A549 (cell line): ENCODE measurements at regions of chr16 and their contacts with region 1.

Region 1: GRCh38 chr16:9033125-9033830 is 58.2 kb upstream of the HAPSTR1 start:
- DNase-seq: peak; percentile 81 to 83
- ATAC-seq: peak; percentile 83 to 95; a peak in 5 of 6 replicates
- H3K4me3 ChIP-seq: no peak overlapping the region
- H3K27ac ChIP-seq: peak overlapping the region in 1 of 2 experiments; percentile 14; a peak in 1 of 6 replicates
- H3K4me1 ChIP-seq: no peaks in the 10 kb centered on the region
- CTCF ChIP-seq: peak; percentile 61
- EP300 ChIP-seq: no peak
- POLR2A ChIP-seq: no peak
- RAD21 ChIP-seq: peak; percentile 38 to 57; a peak in 2 of 5 replicates

Region 2: DNA sequence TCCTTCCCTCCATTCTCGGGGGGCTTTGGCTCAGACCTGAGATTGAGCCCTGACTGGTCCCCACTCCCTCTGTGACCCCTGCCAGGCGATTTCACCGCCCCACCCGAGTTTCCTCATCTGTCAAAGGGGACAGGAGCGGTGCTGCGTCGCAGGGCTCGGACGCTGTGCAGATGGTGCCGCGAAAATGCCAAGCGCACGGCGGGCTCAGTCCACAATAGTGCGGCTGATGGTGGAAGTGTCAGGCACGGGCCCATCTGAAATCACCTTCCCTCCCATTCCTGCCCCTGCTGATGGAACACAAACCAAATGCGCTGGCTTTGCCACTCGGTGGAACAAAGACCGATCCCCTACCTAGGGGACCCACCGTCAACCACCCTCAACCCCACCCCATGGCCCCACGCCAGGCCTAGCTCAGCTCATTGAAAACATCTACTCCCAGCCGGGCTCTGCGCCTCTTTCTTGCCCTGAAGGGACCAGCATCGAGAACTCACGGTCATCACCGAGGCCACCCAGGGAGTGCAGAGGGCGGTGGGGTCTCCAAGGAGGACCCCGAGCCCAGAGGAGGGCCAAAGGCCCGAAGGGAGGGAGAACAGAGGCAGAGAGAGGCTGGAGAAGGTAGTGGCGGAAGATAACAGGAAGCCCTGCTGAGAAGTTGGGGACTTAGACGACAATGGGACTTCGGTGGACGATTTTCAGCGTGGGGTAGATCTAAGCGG is 165.9 kb before region 1 on chr16:
- CTCF ChIA-PET with region 1: no interaction called
- POLR2A ChIA-PET with region 1: no interaction called
- DNase-seq: no peak
- ATAC-seq: no peak
- H3K4me3 ChIP-seq: peak overlapping the region; percentile 60
- H3K27ac ChIP-seq: peak overlapping the region; percentile 91 to 94
- H3K4me1 ChIP-seq: peaks cover 81% of the 10 kb centered on the region
- CTCF ChIP-seq: no peak
- EP300 ChIP-seq: no peak
- POLR2A ChIP-seq: no peak
- RAD21 ChIP-seq: no peak

Region 3: GRCh38 chr16:9016824-9017223 is 16.5 kb before region 1 on chr16:
- CTCF ChIA-PET with region 1: interaction called, 10 read pairs
- POLR2A ChIA-PET with region 1: no interaction called
- DNase-seq: no peak
- ATAC-seq: 0 out of 6 replicates have a peak, but pooled peaks of 1 of the 2 experiments have one; percentile 43
- H3K4me3 ChIP-seq: no peak overlapping the region
- H3K27ac ChIP-seq: no peak overlapping the region
- H3K4me1 ChIP-seq: no peaks in the 10 kb centered on the region; the same call in 2 of the 3 replicates
- CTCF ChIP-seq: no peak
- EP300 ChIP-seq: no peak
- POLR2A ChIP-seq: no peak
- RAD21 ChIP-seq: no peak